ENCODE measurements at regions of chr3 and their contacts with region 1.

Region 1: GRCh38 chr3:17431004-17431403 is 311.4 kb downstream of the TBC1D5 start:
- DNase-seq: peak; percentile 9
- ATAC-seq: peak; percentile 45; the same call in 1 of the 3 replicates
- H3K4me3 ChIP-seq: no peak overlapping the region
- H3K27ac ChIP-seq: no peak overlapping the region
- H3K4me1 ChIP-seq: no peaks in the 10 kb centered on the region
- H3K27me3 ChIP-seq: no peaks in the 10 kb centered on the region
- CTCF ChIP-seq: peak; percentile 49
- EP300 ChIP-seq: no peak
- POLR2A ChIP-seq: no peak
- RAD21 ChIP-seq: no peak

Region 2: GRCh38 chr3:17639765-17640164 is 208.8 kb after region 1 on chr3:
- CTCF ChIA-PET with region 1: no interaction called
- POLR2A ChIA-PET with region 1: no interaction called
- in situ Hi-C with region 1: no loop called
- intact Hi-C with region 1: loop called (anchors 5 kb)
- DNase-seq: peak; percentile 92
- ATAC-seq: peak; percentile 94
- H3K4me3 ChIP-seq: no peak overlapping the region
- H3K27ac ChIP-seq: no peak overlapping the region
- H3K4me1 ChIP-seq: peaks cover 8% of the 10 kb centered on the region
- H3K27me3 ChIP-seq: no peaks in the 10 kb centered on the region
- CTCF ChIP-seq: no peak
- EP300 ChIP-seq: peak in 1 of 2 experiments; percentile 36; a peak in 2 of 4 replicates
- POLR2A ChIP-seq: no peak
- RAD21 ChIP-seq: no peak

Region 3: GRCh38 chr3:17686613-17687012 is 255.6 kb after region 1 on chr3:
- CTCF ChIA-PET with region 1: interaction called, 4 read pairs
- POLR2A ChIA-PET with region 1: no interaction called
- in situ Hi-C with region 1: no loop called
- intact Hi-C with region 1: loop called (anchors 1 kb)
- DNase-seq: peak; percentile 25
- ATAC-seq: peak; percentile 63
- H3K4me3 ChIP-seq: no peak overlapping the region
- H3K27ac ChIP-seq: no peak overlapping the region
- H3K4me1 ChIP-seq: no peaks in the 10 kb centered on the region
- H3K27me3 ChIP-seq: no peaks in the 10 kb centered on the region
- CTCF ChIP-seq: peak; percentile 54
- EP300 ChIP-seq: no peak
- POLR2A ChIP-seq: no peak
- RAD21 ChIP-seq: no peak

Region 4: DNA sequence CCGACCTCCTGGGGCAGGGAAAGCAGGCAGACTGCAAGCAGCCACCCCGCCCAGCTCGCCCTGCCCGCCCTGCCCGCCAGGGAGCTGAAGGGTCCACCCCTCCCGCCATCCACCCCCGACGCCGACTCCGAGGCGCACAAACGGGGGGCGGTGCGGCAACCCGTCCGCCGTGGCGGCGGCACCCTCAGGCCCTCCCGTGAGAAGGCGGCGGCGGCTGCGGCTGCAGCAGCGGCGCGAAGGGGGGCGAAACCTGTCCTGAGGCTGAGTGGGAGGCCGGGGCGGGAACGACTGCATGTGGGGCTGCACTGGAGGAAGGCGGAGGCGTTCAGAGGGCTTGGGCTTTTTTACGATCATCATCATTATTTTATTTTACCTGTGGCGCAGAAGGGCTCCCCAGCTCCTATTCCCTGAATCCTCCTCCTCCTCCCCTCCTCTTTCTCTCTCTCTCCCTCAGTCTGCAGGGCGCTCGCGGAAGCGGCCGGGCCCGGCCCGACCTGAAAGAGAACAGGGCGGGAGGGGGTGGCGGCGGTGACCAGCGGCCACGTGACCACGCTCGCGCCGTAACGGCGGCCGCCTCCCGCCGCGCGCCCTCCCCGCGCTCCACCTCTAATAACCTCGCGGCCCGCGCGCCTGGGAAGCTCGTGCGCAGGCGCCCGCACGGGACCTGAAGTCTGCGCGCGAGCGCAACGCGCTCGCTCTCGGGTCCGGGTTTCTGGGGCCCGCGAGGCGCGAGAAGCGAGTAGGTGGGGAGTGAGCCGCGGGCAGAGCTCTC is 311.3 kb after region 1 on chr3 and contains the start of gene TBC1D5:
- CTCF ChIA-PET with region 1: no interaction called
- POLR2A ChIA-PET with region 1: no interaction called
- in situ Hi-C with region 1: no loop called
- intact Hi-C with region 1: loop called (anchors 5 kb)
- DNase-seq: peak; percentile 94
- ATAC-seq: peak; percentile 88
- H3K4me3 ChIP-seq: peak within 1 kb of the TSS; percentile 79 to 88 (median 79)
- H3K27ac ChIP-seq: peak within 1 kb of the TSS; percentile 98
- H3K4me1 ChIP-seq: peaks cover 60% of the 10 kb centered on the region
- H3K27me3 ChIP-seq: no peaks in the 10 kb centered on the region; a peak in 1 of 5 replicates
- CTCF ChIP-seq: no peak; the same call in 1 of the 2 replicates
- EP300 ChIP-seq: 0 out of 4 replicates have a peak, but pooled peaks of 1 of the 2 experiments have one; percentile 11
- POLR2A ChIP-seq: peak; percentile 78
- RAD21 ChIP-seq: peak; percentile 27; the same call in 1 of the 2 replicates
- total RNA-seq, gene TBC1D5: 33.3 and 50.5 TPM in 2 replicates

Region 5: GRCh38 chr3:17831366-17831765 is 400.4 kb after region 1 on chr3:
- CTCF ChIA-PET with region 1: no interaction called
- POLR2A ChIA-PET with region 1: no interaction called
- in situ Hi-C with region 1: loop called (anchors 10 kb)
- intact Hi-C with region 1: no loop called
- DNase-seq: no peak
- ATAC-seq: no peak
- H3K4me3 ChIP-seq: no peak overlapping the region
- H3K27ac ChIP-seq: no peak overlapping the region
- H3K4me1 ChIP-seq: no peaks in the 10 kb centered on the region
- H3K27me3 ChIP-seq: 0 out of 5 replicates have a peak, but pooled peaks cover 0 to 2% of the 10 kb centered on the region in 2 experiments
- CTCF ChIP-seq: no peak
- EP300 ChIP-seq: no peak
- POLR2A ChIP-seq: no peak
- RAD21 ChIP-seq: no peak

Region 6: GRCh38 chr3:17841190-17841828 is 410.3 kb after region 1 on chr3:
- CTCF ChIA-PET with region 1: interaction called, 9 read pairs
- POLR2A ChIA-PET with region 1: no interaction called
- in situ Hi-C with region 1: loop called (anchors 10 kb)
- intact Hi-C with region 1: loop called (anchors 1 kb)
- DNase-seq: peak; percentile 57
- ATAC-seq: peak; percentile 99
- H3K4me3 ChIP-seq: no peak overlapping the region
- H3K27ac ChIP-seq: no peak overlapping the region
- H3K4me1 ChIP-seq: no peaks in the 10 kb centered on the region
- H3K27me3 ChIP-seq: no peaks in the 10 kb centered on the region
- CTCF ChIP-seq: peak; percentile 96
- EP300 ChIP-seq: no peak
- POLR2A ChIP-seq: no peak
- RAD21 ChIP-seq: peak; percentile 90

Measured in HepG2 (cell line).